ENCODE measurements at regions of chr6 and their contacts with region 1.

Region 1: DNA sequence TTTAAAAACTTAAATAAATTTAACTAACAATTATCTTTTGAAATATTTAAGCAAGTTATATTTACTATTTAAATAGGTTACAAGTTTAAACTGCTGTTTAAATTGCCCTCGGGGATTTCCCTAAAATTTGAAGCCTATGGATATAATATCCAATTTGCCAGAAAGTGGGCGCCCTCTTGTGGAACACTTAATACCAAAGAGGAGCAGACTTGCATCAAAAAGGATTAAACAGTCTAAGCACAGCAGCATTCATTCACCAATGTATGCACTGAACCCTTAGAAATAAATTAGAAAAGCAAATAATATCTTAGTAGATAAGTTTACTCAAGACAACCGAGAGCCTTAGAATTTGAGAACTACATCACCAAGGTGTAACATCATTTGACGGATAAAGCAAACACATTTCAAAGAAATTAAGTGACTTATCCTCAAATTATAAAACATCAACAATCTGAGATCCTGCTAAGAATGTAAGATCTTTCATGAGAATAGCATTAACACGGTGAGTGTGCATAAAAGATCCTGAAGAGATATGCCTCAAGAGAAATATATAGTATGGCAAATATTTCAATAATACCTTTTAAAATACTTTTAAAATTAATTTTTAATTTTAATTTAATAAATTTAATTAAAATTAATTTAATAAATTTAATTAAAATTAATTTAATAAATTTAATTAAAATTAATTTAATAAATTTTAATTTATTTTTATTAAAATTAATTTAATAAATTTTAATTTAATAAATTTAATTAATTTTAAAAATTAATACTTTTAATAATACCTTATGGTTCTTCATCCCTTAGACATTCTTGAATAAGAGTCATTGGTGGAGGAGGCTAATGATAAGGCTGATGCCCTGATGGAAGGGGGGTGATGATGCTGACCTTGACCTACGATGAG is 11.5 kb upstream of the MEP1A start:
- DNase-seq: no peak
- ATAC-seq: peak; percentile 68; the same call in 2 of the 3 replicates
- H3K4me3 ChIP-seq: no peak overlapping the region
- H3K27ac ChIP-seq: no peak overlapping the region
- H3K4me1 ChIP-seq: no peaks in the 10 kb centered on the region
- H3K27me3 ChIP-seq: no peaks in the 10 kb centered on the region
- CTCF ChIP-seq: peak; percentile 53 to 60 (median 56)
- EP300 ChIP-seq: no peak
- POLR2A ChIP-seq: no peak
- RAD21 ChIP-seq: peak; percentile 65

Region 2: DNA sequence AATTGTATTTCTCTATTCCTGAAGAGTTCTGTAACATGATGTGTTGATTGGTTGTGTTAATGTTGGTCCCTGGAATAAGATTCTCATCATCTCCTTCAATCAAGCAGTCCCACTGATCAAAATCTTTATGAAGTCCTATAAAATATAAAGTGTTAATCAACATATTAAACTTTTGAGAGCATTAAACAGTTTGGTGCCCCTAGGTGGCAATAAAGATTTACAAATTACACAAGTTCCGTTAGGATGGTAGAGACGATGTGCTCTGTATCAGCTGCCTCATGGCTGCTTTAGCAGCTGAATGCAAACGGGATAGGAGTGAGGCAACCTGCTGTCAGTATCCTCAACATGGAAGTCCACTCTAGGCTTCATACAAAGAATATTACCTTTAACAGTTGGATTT is 77.2 kb before region 1 on chr6:
- CTCF ChIA-PET with region 1: no interaction called
- POLR2A ChIA-PET with region 1: no interaction called
- RAD21 ChIA-PET with region 1: no interaction called
- SMC1A ChIA-PET with region 1: no interaction called
- in situ Hi-C with region 1: no loop called
- intact Hi-C with region 1: loop called (anchors 2 kb)
- DNase-seq: no peak
- ATAC-seq: no peak
- H3K4me3 ChIP-seq: no peak overlapping the region
- H3K27ac ChIP-seq: no peak overlapping the region
- H3K4me1 ChIP-seq: no peaks in the 10 kb centered on the region
- H3K27me3 ChIP-seq: no peaks in the 10 kb centered on the region
- CTCF ChIP-seq: peak in 1 of 3 experiments; percentile 17; a peak in 1 of 6 replicates
- EP300 ChIP-seq: no peak
- POLR2A ChIP-seq: no peak
- RAD21 ChIP-seq: no peak